Activated CD8-positive, alpha-beta T cell treated with anti-CD3 and anti-CD28 coated beads for 36 hours (primary cell): ENCODE measurements at regions of chr7 and their contacts with region 1.

Region 1: DNA sequence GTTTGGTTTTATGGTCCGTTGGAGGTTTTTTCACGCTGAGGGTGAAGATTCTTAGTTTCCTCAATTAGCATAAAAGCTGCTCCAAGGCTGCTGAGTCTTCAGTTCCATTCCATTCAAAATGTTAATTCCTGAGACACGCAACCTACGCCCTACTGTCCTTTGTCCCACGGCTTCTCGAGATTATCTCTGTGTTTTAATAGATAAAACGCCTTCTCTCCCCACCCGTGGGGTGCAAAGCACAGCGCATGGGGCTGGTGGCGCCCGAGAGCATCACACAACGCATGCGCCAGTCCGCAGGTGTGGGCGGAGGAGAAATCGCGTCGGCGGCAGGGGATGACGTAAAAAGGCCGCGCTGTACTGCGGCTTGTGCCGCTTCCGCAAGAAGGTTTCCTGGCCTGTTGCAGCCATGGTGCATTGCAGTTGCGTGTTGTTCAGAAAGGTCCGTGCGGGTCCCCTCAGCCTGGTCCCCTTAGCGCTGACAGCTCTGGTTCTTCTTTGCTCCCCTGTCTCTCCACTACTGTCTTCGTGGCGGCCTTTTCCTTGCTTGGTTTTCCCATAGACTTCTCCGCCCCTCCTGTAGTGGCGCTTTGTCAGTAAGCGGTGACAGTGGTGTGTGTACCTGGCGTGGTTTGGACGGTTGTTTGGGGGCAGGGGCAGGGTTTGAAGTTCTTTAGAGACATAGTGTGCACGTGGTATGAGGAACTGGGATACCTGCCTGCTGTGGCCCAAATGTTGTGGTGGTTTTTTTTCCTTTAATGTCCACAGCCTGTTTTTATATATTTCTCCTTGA is at the start of gene GTPBP10:
- DNase-seq: peak; percentile 96
- ATAC-seq: peak; percentile 97
- H3K4me3 Mint-ChIP-seq: peak within 1 kb of the TSS; percentile 95
- H3K27ac Mint-ChIP-seq: peak within 1 kb of the TSS; percentile 98
- H3K4me1 Mint-ChIP-seq: peaks cover 39% of the 10 kb centered on the region
- H3K27me3 Mint-ChIP-seq: no peaks in the 10 kb centered on the region
- CTCF ChIP-seq: peak; percentile 68
- total RNA-seq, gene GTPBP10: 47.9 to 48.1 TPM

Region 2: GRCh38 chr7:90403174-90404113 is 56.9 kb after region 1 on chr7 and contains the start of gene CLDN12:
- CTCF ChIA-PET with region 1: interaction called, 6 read pairs
- POLR2A ChIA-PET with region 1: interaction called, 3 read pairs
- intact Hi-C with region 1: loop called (anchors 5 kb)
- DNase-seq: peak; percentile 93
- ATAC-seq: peak; percentile 98
- H3K4me3 Mint-ChIP-seq: peak within 1 kb of the TSS; percentile 84
- H3K27ac Mint-ChIP-seq: peak within 1 kb of the TSS; percentile 88
- H3K4me1 Mint-ChIP-seq: peaks cover 11% of the 10 kb centered on the region
- H3K27me3 Mint-ChIP-seq: no peaks in the 10 kb centered on the region
- CTCF ChIP-seq: no peak
- total RNA-seq, gene CLDN12: 3.9 to 4.3 TPM

Region 3: DNA sequence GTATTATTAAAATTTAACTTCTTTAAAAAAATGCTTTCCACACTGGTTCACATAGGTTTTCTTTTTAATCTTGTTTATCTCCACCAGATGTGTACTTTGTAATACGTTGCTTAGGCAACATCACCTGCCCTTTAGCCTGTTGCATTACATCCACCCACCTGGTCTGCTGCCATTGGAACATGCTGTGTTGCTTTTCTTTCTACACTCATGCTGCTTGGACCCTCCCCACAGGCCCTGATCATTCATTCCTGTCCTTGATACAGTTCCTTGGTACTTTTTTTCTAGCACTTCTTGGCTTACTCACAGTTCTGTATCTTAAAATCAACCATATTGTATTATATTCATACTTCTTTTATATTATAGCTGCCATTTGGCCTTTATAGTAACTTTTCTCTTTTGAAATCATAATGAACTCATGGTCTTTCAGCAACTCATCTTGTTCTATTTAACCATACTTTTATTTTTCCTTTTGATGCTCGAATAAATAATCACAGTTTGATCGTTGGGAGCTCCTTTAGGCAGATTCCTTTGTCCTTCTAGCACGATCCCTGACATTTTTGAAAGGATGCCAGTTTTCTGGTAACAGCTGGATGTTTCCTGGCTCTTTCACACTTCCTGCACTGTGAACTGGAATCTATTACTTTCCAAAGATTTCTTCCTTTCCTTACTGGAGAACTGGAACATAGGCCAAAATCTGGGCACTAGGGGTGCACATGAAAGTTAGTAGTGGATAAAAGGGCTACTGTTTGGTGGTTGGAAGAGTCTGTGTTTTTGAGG is 374.6 kb after region 1 on chr7:
- CTCF ChIA-PET with region 1: no interaction called
- POLR2A ChIA-PET with region 1: no interaction called
- intact Hi-C with region 1: no loop called
- DNase-seq: no peak
- ATAC-seq: no peak
- H3K4me3 Mint-ChIP-seq: no peak overlapping the region
- H3K27ac Mint-ChIP-seq: no peak overlapping the region
- H3K4me1 Mint-ChIP-seq: no peaks in the 10 kb centered on the region
- H3K27me3 Mint-ChIP-seq: no peaks in the 10 kb centered on the region
- CTCF ChIP-seq: no peak